Caco-2 (cell line): ENCODE measurements at regions of chr15 and their contacts with region 1.

Region 1: GRCh38 chr15:37079726-37080125 is 20.6 kb downstream of the MEIS2 start:
- DNase-seq: no peak
- H3K4me3 ChIP-seq: no peak overlapping the region
- H3K4me3 Mint-ChIP-seq: no peak overlapping the region
- H3K27ac Mint-ChIP-seq: no peak overlapping the region
- H3K4me1 ChIP-seq: peaks cover 53% of the 10 kb centered on the region
- H3K4me1 Mint-ChIP-seq: peaks cover 21% of the 10 kb centered on the region
- H3K27me3 ChIP-seq: no peaks in the 10 kb centered on the region
- H3K27me3 Mint-ChIP-seq: no peaks in the 10 kb centered on the region
- CTCF ChIP-seq: no peak

Region 2: DNA sequence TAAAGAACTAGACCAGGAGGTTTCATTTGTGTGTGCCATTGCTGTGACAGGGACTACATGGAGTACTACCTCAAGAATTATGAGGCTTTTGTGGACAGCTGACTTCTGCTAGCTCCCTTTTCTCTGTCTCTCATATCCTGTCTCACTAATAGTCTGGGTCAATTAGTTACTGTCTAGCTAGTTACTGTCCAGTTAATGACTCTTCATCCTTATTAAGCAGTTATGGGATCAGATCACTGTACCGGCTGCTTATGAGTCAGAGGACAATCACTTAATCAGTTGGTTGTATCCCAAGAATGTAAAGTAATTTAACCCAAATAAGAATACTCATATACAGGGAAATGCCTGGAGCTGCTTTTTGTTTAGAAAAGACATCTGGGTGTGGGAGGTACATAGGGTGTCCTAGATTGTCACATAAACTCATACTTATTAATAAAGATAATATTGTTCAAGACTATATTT is 342.3 kb before region 1 on chr15:
- CTCF ChIA-PET with region 1: no interaction called
- POLR2A ChIA-PET with region 1: no interaction called
- intact Hi-C with region 1: no loop called
- DNase-seq: no peak
- H3K4me3 ChIP-seq: no peak overlapping the region
- H3K4me3 Mint-ChIP-seq: no peak overlapping the region
- H3K27ac Mint-ChIP-seq: no peak overlapping the region
- H3K4me1 ChIP-seq: peaks cover 2% of the 10 kb centered on the region; the same call in 1 of the 2 replicates
- H3K4me1 Mint-ChIP-seq: no peaks in the 10 kb centered on the region
- H3K27me3 ChIP-seq: no peaks in the 10 kb centered on the region
- H3K27me3 Mint-ChIP-seq: no peaks in the 10 kb centered on the region
- CTCF ChIP-seq: no peak

Region 3: DNA sequence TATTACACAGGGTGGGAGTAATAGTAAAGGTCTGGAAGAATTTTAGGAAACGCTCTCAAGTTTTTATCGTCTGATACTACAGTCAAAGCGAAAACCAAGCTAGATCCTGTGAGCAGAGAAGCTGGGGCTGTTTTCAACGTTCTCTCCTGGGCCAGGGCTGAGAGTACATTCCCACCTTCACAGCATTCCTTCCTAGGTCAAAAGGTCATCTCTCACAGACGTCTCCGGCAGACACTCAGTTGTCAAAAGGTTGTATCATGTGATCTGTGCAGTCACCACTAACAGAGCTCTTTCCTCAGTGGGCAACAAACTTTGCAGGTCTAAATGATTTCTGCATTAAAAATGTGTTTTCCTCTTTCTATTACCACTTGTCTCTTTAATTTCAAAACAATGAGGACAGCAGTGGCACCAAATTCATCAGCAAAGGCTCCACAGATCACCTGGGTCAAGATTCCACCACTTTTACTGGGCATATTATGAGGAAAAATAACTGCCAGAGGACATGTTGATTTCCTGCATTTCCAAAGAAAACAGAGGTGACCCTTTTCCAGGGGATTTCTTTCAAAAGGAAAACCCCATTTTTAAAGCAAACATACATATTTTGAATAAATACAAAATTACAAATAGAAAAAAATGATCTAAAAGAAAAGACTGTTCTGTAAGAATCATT is 21.3 kb before region 1 on chr15:
- CTCF ChIA-PET with region 1: no interaction called
- POLR2A ChIA-PET with region 1: interaction called, 3 read pairs
- intact Hi-C with region 1: loop called (anchors 1 kb)
- DNase-seq: peak; percentile 58 to 75
- H3K4me3 ChIP-seq: no peak overlapping the region
- H3K4me3 Mint-ChIP-seq: peak overlapping the region; percentile 34
- H3K27ac Mint-ChIP-seq: peak overlapping the region; percentile 52
- H3K4me1 ChIP-seq: peaks cover 25% of the 10 kb centered on the region
- H3K4me1 Mint-ChIP-seq: peaks cover 11% of the 10 kb centered on the region
- H3K27me3 ChIP-seq: no peaks in the 10 kb centered on the region
- H3K27me3 Mint-ChIP-seq: no peaks in the 10 kb centered on the region
- CTCF ChIP-seq: no peak